T-cell (primary cell): ENCODE measurements at regions of chr16 and their contacts with region 1.

Region 1: DNA sequence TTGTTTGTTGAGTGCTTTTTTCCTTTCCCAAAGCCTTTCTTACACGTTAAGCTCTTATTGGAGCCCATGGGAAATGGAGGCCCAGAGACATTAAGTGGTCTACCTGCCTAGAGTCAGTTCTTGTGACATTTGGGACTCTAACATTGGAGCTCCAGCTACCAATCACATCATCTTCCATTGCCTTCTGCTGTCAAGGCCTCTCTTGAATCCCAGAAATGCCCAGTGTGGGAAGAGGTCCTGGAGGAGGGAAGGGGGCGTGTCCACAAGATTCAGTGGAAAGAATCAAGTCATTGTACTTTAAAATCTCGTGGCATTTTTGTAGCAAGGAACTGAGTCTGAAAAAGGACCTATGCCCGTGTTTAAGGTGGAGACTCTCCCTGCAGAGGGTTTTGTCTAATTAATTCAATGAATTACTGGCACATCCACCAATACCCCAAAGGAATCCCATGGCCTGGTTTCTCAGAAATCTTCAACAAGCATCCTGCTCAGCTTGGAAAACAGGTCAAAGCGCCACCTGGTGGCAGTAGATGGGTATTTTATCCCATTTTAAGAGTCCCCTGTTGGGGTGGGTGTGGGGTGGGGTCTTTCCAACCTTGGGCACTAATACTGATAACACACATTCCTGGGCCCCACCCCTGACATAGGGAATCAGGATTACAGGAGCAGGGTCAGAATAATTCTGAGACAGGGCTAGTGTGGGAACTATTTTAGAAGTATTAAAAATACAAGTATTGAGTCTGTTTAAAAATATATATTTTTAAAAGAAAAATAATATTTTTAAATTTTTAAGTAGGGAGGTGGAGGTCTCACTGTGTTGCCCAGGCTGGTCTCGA is 24.6 kb downstream of the GPT2 start:
- DNase-seq: peak; percentile 9 to 78 (median 45)
- ATAC-seq: peak in 3 of 4 experiments; percentile 39 to 44 (median 42)
- H3K4me3 ChIP-seq: no peak overlapping the region
- H3K4me3 Mint-ChIP-seq: no peak overlapping the region
- H3K27ac ChIP-seq: no peak overlapping the region
- H3K27ac Mint-ChIP-seq: no peak overlapping the region
- H3K4me1 ChIP-seq: no peaks in the 10 kb centered on the region
- H3K4me1 Mint-ChIP-seq: peaks cover 0 to 6% (median 2%) of the 10 kb centered on the region in 3 donors
- H3K27me3 ChIP-seq: no peaks in the 10 kb centered on the region
- H3K27me3 Mint-ChIP-seq: no peaks in the 10 kb centered on the region

Region 2: DNA sequence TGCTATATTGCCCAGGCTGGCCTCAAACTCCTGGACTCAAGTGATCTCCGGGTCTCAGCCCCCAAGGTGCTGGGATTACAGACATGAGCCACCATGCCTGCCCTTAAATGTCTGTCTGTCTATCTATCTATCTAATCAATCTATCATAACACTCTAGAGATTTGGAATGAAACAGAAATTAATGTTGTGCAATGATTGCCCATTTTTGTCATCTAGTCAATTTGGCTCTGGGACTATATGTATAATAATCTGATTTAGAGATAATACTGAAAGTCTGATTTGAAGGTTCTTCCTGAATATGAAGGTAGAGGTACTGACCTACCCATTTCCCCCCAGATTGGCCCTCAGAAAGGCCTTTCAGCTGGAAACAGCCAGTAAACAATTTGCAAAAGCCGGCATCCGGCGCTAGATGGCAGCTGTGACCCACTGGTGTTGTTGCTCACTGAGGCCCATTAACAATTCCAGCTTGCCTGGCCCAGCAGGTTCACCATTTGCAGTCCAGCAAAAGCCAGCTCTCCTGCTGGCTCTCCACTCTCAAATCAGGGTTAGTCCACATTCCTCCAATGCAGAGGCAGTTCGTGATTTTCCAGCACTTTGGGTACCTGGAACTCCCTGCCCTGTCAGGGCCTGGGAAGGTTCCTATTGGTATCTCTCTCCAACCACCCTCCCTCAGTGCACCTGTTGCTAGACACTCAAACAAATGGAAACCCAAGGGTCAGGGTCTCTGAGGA is 54.9 kb before region 1 on chr16:
- CTCF ChIA-PET with region 1: interaction called, 3 to 12 read pairs
- POLR2A ChIA-PET with region 1: no interaction called
- DNase-seq: peak in 32 of 35 experiments; percentile 8 to 67 (median 38)
- ATAC-seq: peak; percentile 23 to 61 (median 44)
- H3K4me3 ChIP-seq: no peak overlapping the region
- H3K4me3 Mint-ChIP-seq: no peak overlapping the region
- H3K27ac ChIP-seq: no peak overlapping the region
- H3K27ac Mint-ChIP-seq: no peak overlapping the region
- H3K4me1 ChIP-seq: no peaks in the 10 kb centered on the region
- H3K4me1 Mint-ChIP-seq: no peaks in the 10 kb centered on the region
- H3K27me3 ChIP-seq: no peaks in the 10 kb centered on the region
- H3K27me3 Mint-ChIP-seq: no peaks in the 10 kb centered on the region

Region 3: DNA sequence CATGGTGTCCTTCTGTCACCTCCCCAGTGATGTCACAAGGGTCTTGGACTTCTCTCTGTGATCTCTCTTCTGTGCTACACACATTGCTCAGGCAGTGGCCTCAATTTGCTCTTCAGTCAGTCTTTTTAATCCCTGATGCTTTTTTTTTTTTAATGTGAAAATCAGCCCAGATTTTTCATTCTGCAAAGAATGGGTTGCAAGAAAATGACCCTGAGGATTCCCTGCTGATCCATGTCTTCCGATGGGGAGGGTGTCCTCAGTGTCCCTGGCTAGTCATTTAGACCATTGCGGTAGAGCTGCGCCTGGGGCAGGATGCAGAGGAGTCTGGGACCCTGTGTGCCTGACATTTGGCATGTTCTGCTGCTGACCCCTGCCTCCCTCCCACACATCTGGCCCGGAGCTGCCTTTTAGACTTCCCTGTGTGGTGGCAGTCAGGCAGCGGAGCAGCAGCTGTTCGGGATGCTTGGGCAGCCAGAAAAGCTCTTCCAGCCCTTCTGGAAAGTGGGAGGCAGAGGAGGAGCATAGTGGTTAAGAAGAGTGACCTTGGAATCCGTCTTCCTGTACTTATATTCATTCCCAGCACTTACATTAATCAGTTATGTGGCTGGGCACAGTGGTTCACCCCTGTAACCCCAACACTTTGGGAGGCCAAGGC is 12.3 kb before region 1 on chr16:
- CTCF ChIA-PET with region 1: no interaction called
- POLR2A ChIA-PET with region 1: no interaction called
- DNase-seq: no peak
- ATAC-seq: no peak
- H3K4me3 ChIP-seq: no peak overlapping the region
- H3K4me3 Mint-ChIP-seq: no peak overlapping the region
- H3K27ac ChIP-seq: no peak overlapping the region
- H3K27ac Mint-ChIP-seq: no peak overlapping the region
- H3K4me1 ChIP-seq: no peaks in the 10 kb centered on the region
- H3K4me1 Mint-ChIP-seq: no peaks in the 10 kb centered on the region
- H3K27me3 ChIP-seq: peaks cover 0 to 18% of the 10 kb centered on the region in 2 experiments
- H3K27me3 Mint-ChIP-seq: peaks cover 0 to 4% of the 10 kb centered on the region in 2 donors